ENCODE measurements at regions of chr2 and their contacts with region 1.

Region 1: DNA sequence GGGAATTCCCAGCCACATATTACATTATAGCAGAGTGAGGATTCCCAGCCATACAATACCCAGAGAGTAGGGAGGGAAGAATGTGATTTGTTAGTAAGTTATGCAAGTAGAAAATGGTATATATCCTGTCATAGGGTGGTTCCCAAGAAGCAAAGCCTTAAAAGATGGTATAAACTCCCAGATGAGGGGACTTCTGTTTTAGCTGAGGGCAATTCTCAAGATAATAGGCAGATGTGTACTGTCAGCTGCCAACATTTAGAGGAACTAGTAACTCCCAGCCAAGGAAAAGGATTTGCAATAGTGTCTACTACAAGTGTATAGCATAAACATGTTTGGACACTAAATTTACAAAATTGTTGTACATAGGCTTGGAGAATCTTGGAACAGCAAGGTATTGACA is 86.5 kb downstream of the XDH start:
- DNase-seq: no peak
- H3K4me3 ChIP-seq: no peak overlapping the region
- H3K27ac ChIP-seq: no peak overlapping the region
- H3K4me1 ChIP-seq: peaks cover 0 to 41% (median 4%) of the 10 kb centered on the region in 3 donors
- H3K27me3 ChIP-seq: peaks cover 0 to 4% (median 0%) of the 10 kb centered on the region in 4 donors
- CTCF ChIP-seq: no peak
- POLR2A ChIP-seq: no peak

Region 2: DNA sequence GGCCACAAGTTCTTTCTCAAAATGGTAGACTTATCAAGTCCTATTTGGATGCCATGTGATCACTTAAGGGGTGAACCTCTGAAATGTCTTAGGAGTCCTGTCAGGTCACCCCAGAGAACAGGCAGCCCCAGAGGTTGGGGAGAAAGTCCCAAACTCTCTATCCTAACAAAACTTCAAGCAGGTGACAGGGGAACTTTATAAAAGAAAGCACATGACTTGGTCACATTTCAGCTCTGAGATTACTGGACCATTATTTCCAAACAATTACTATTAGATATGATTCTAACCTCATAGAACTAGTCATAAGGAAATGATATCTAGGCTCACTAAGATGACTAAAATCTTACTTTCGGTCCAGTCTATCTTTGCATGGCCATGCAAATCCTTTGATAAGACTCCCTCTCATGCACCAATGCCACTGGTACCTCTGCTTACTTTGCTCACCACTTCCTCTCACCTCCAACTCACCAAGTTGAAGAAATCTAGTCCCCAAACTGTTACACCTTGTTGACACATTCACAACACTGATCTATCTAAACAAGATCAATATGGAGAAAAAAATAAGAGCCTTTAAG is 296.8 kb before region 1 on chr2:
- intact Hi-C with region 1: no loop called
- DNase-seq: no peak
- H3K4me3 ChIP-seq: no peak overlapping the region
- H3K27ac ChIP-seq: no peak overlapping the region
- H3K4me1 ChIP-seq: no peaks in the 10 kb centered on the region
- H3K27me3 ChIP-seq: no peaks in the 10 kb centered on the region
- CTCF ChIP-seq: no peak
- POLR2A ChIP-seq: no peak

Region 3: GRCh38 chr2:31233741-31234682 is 94.0 kb before region 1 on chr2 and contains the start of gene EHD3:
- intact Hi-C with region 1: loop called (anchors 5 kb)
- DNase-seq: peak; percentile 50
- H3K4me3 ChIP-seq: peak within 1 kb of the TSS; percentile 55 to 75 (median 62)
- H3K27ac ChIP-seq: peak within 1 kb of the TSS; percentile 66 to 85 (median 83)
- H3K4me1 ChIP-seq: peaks cover 5 to 65% (median 40%) of the 10 kb centered on the region in 3 donors
- H3K27me3 ChIP-seq: no peaks in the 10 kb centered on the region
- CTCF ChIP-seq: peak in 5 of 6 experiments; percentile 34 to 60 (median 47)
- POLR2A ChIP-seq: peak in 2 of 4 donors; percentile 15 to 55
- total RNA-seq, gene EHD3: 22.6 to 54.5 (median 38.1) TPM

Region 4: DNA sequence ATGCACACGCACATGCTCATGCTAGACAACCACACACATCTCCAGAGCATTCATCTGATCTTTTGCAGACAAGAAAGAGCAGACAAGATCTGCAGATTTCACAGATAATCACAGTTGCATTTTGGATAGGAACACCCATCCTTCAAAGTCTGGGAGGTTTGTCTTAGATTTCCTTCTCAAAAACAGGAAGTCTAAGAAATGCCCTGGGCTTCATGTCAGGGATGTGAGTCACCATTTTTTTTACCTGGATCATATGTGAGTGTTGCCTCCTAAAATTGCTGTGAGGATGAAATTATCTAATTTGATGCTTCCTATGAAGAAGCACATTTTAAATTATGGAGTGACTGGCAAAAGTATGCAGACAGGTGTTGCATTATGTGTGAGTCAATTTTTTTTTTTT is 206.6 kb after region 1 on chr2:
- intact Hi-C with region 1: no loop called
- DNase-seq: no peak
- H3K4me3 ChIP-seq: no peak overlapping the region
- H3K27ac ChIP-seq: no peak overlapping the region
- H3K4me1 ChIP-seq: no peaks in the 10 kb centered on the region
- H3K27me3 ChIP-seq: peaks cover 0 to 3% (median 0%) of the 10 kb centered on the region in 4 donors
- CTCF ChIP-seq: no peak
- POLR2A ChIP-seq: no peak